Dendritic cell treated with granulocyte-macrophage colony-stimulating factor and Interleukin-4, amounts not matched to agents 40 ng/mL and 50 ng/mL, for 4 days (primary cell): ENCODE measurements at regions of chr15 and their contacts with region 1.

Region 1: GRCh38 chr15:57861036-57861638 is 154.6 kb downstream of the POLR2M start:
- H3K4me3 Mint-ChIP-seq: no peak overlapping the region
- H3K27ac Mint-ChIP-seq: no peak overlapping the region
- H3K4me1 Mint-ChIP-seq: no peaks in the 10 kb centered on the region
- H3K27me3 Mint-ChIP-seq: peaks cover 25% of the 10 kb centered on the region

Region 2: DNA sequence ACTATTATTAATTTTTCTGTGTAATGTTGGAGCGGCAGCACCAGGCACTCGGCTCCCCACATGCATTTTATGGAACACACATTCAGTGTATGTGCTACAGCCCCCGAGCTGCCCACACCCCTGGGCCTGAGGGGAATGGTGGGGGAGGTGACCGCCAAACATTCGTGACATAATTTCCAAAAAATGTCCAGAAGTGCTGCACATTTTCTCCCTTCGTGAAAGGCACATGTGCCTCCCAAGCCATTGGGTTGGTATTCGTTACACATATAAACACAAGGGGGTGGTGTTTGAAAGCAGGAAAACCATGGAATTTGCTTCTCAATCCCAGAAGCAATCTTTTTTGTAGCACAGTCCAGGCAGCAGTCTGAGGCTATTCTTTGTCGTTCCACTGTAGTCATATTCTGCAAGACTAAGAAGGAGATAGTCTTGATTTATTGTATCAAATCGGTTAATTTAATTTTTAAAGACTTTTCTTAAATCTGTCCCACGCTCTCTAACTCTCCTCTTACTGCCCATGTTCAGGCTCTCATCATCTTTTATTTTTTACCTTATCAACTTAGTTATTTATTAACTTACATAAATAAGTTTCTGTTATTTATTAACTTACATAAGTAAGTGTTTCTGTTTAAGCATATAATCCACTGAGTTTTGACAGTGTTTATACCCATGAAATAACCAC is 193.8 kb before region 1 on chr15:
- intact Hi-C with region 1: no loop called
- H3K4me3 Mint-ChIP-seq: no peak overlapping the region
- H3K27ac Mint-ChIP-seq: no peak overlapping the region
- H3K4me1 Mint-ChIP-seq: no peaks in the 10 kb centered on the region
- H3K27me3 Mint-ChIP-seq: peaks cover 7% of the 10 kb centered on the region

Region 3: DNA sequence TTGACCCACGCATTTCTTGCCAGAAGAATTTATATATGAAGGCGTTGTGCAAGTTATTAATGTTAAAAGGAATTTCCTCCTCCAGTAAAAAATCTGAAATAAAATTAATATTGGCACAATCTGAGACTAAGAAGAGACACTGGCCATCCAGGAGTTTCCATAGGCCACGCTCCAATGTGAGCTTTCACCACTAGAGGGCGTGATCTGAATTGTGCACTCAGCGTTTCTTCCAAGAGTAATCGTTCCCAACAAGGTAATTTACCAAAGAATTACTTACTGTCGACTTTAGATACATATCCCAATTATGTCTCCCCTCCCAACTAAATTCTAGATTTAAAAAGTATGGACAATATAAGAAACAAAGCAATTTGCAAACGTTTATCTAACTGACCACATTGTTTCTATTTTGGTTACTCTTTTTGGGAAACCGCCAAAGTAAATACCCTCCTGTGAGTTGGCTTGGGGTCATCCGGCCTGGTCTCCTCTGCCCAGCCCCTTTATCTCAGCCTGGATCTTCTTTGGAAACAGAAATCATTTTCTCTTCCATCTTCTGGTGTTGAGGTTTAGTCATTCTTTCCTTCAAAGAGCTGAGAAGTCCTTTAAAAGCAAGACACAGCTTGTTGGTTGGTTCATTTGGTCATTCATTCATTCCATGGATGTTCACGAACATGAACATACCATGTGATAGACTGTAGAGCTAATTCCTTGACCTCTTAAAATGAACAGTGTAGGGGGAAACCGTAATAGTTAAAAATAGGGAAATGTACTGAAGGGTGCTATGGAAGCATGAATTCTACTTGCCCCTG is 128.4 kb before region 1 on chr15:
- intact Hi-C with region 1: loop called (anchors 5 kb)
- H3K4me3 Mint-ChIP-seq: no peak overlapping the region
- H3K27ac Mint-ChIP-seq: no peak overlapping the region
- H3K4me1 Mint-ChIP-seq: no peaks in the 10 kb centered on the region
- H3K27me3 Mint-ChIP-seq: no peaks in the 10 kb centered on the region

Region 4: DNA sequence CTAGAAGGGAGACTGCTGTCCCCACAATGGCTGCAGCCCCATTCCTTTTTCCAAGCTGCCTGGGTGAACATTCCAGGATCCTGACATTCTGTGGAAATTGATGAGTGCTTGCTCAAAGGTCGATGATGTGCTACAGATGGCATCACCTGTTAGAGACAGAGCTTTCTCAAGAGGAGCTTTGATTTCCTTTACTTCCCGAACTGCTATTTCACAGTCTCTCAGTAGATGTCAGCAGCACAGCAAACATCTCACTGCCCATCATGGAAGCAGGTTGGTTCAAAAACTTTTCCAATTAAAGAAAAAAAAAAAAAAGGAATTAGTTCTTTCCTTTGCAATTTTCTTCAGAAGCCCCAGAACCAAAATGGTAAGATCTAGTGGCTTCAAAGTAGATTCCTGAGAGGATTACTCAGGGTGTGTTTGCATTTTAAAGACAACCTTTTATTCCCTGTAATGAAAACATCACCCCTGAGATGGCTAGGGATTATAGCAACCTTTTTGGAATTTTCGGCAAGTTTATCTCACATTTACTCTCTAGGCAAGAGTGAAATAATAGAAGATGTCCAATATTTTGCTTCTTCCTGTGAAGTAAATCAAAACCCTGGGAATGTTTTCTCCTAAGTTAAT is 109.8 kb before region 1 on chr15:
- intact Hi-C with region 1: loop called (anchors 1 kb)
- H3K4me3 Mint-ChIP-seq: no peak overlapping the region
- H3K27ac Mint-ChIP-seq: no peak overlapping the region
- H3K4me1 Mint-ChIP-seq: peaks cover 8% of the 10 kb centered on the region
- H3K27me3 Mint-ChIP-seq: peaks cover 2% of the 10 kb centered on the region

Region 5: DNA sequence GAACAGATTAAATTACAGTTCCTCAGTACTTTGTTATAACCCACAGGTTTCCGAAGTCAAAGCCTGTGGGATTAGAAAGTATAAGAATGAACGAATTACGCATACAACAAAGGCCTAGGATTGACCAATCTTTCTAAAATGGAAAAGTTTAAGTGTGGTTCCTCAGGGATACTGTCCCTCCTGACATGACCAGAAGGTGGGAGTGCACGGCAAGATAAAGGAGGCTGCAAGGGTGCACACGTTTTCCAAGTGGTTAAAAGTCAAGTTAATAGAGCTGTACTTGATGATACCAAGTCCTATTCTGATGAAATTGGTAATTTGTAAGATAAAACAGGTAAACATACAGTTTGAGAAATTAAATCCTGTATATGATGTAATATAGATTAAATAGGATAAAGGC is 108.2 kb after region 1 on chr15:
- intact Hi-C with region 1: no loop called
- H3K4me3 Mint-ChIP-seq: no peak overlapping the region
- H3K27ac Mint-ChIP-seq: no peak overlapping the region
- H3K4me1 Mint-ChIP-seq: no peaks in the 10 kb centered on the region
- H3K27me3 Mint-ChIP-seq: peaks cover 2% of the 10 kb centered on the region